Activated CD4-positive, alpha-beta T cell treated with anti-CD3 and anti-CD28 coated beads for 36 hours (primary cell): ENCODE measurements at regions of chr2 and their contacts with region 1.

Region 1: DNA sequence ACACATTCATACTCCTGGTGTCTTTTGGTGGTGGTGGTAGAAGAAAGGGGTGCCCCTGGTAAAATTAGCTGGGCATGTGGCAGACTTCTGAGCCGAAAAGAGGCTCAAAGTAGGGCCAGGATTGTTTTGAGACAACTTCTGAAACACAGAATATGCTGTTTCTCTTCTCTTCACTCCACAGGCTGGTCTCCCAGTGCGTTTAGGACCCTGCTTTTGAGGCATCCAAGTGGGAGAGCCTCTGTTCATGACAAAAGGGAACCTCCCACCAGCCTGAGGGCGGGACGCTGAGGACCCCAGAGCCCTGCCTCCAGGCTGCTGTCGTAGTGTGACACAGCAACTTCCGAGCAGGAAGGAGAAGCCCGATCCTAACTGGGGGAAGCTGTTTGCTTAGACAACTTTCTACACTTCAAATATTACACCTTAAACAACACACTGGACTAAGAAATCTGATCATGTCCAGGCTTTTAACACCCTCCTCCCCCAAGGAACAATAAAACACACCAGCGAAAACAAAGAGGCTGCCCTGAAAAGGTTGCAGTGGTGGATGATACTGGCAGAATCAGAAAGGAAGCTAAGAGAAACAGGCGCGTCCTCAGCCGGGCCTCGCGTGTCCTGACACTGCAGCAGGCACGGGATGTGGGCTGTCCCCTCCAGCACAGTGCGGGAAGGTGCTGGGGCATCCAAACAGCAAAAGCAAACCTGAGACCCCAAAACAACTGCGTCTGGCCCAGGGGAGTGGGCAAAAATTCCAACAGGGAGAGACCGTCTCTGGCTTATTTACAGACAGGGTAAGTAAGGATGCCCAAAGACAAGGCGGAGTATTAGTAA is 9.3 kb downstream of the SERTAD2 start:
- DNase-seq: peak; percentile 72
- ATAC-seq: peak; percentile 73
- H3K4me3 Mint-ChIP-seq: peak overlapping the region; percentile 74
- H3K27ac Mint-ChIP-seq: peak overlapping the region; percentile 94
- H3K4me1 Mint-ChIP-seq: peaks cover 82% of the 10 kb centered on the region
- H3K27me3 Mint-ChIP-seq: no peaks in the 10 kb centered on the region

Region 2: DNA sequence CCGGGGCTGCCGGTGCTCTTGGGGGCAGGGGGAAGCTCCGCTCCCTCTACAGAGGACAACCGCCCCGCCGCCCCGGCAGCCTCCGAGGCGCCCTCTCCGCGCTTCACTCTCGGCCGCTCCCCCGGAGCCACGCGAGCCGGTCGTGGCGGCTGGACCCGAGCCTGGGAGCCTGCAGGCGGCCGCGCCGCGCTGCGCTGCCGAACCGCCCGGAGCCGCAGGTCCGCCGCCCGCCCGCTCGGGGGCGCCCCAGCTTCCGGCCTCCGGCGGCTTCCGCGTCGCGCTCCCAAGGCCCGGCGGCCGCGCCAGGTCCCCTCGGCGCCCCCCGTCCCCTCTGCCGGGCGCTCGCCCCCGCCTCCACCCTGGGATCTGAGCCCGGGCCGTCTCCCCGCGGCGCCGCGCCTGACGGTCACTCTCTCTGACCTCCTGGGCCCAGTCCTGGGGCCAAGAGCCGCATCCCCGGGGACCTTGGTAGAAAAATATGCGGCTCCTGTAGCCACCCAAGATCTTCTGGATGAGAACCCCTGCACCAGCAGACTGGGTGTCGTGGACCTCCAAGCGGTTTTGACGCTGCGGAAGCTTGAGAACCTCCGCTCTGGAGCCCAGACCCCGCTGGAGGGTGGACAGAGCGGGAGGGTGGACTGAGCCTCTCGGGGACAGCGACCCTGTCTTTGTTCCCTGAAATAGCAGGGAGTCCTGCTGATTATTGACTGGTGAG is 35.0 kb before region 1 on chr2:
- CTCF ChIA-PET with region 1: interaction called, 22 read pairs
- POLR2A ChIA-PET with region 1: interaction called, 5 read pairs
- intact Hi-C with region 1: no loop called
- DNase-seq: peak; percentile 82
- ATAC-seq: peak; percentile 61
- H3K4me3 Mint-ChIP-seq: peak overlapping the region; percentile 65
- H3K27ac Mint-ChIP-seq: no peak overlapping the region
- H3K4me1 Mint-ChIP-seq: peaks cover 25% of the 10 kb centered on the region
- H3K27me3 Mint-ChIP-seq: no peaks in the 10 kb centered on the region

Region 3: GRCh38 chr2:64666810-64667438 is 22.5 kb after region 1 on chr2:
- CTCF ChIA-PET with region 1: interaction called, 11 read pairs
- POLR2A ChIA-PET with region 1: no interaction called
- intact Hi-C with region 1: no loop called
- DNase-seq: no peak
- ATAC-seq: peak; percentile 69
- H3K4me3 Mint-ChIP-seq: no peak overlapping the region
- H3K27ac Mint-ChIP-seq: peak overlapping the region; percentile 58
- H3K4me1 Mint-ChIP-seq: peaks cover 49% of the 10 kb centered on the region
- H3K27me3 Mint-ChIP-seq: no peaks in the 10 kb centered on the region

Region 4: GRCh38 chr2:64704161-64704560 is 59.8 kb after region 1 on chr2:
- CTCF ChIA-PET with region 1: interaction called, 10 read pairs
- POLR2A ChIA-PET with region 1: no interaction called
- intact Hi-C with region 1: loop called in 1 of 2 experiments (anchors 2 kb)
- DNase-seq: no peak
- ATAC-seq: no peak
- H3K4me3 Mint-ChIP-seq: no peak overlapping the region
- H3K27ac Mint-ChIP-seq: no peak overlapping the region
- H3K4me1 Mint-ChIP-seq: peaks cover 37% of the 10 kb centered on the region
- H3K27me3 Mint-ChIP-seq: no peaks in the 10 kb centered on the region

Region 5: DNA sequence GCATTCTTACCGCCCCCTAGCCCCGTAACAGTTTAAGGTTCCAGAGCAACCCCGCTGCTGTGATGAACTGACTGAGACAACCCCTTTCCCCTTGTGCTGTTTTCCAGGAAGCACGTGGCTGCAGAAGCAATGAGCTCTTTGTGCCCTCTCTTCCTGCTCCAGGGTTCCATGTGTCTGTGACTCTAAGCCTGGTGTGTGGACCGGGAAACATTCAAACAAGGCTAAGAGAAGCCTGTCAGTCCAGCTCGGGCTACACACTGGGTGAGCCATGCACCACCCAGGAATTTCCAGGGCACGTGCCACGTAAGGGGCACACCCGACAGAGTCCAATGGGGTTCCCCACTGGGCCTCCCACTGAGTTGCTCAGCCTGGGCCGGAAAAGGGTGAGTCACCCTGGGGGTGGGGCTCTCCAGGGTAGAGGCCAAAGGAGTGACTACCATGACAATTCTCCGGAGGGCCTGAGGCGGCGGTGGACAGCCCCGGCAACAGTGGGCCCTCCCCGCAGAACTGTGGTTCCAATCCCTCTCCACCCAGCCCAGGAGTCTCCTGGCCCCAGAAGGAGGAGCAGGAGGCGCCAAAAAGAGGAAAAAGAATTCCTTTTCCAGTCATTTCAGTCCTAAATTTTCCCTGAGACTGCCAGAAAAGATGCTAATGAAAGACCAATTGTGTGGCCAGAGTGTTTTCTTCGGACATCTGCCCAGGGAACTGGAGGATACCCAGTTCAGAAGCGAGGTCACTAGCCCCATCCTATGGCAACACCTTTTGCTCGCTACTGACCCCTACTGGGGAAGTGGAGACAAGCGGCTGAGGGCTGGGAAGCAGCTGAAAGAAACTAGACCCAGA is 187.0 kb after region 1 on chr2:
- CTCF ChIA-PET with region 1: interaction called, 20 read pairs
- POLR2A ChIA-PET with region 1: no interaction called
- intact Hi-C with region 1: loop called (anchors 1 to 2 kb)
- DNase-seq: peak; percentile 92
- ATAC-seq: peak; percentile 96
- H3K4me3 Mint-ChIP-seq: peak overlapping the region; percentile 34
- H3K27ac Mint-ChIP-seq: peak overlapping the region; percentile 86
- H3K4me1 Mint-ChIP-seq: peaks cover 16% of the 10 kb centered on the region
- H3K27me3 Mint-ChIP-seq: no peaks in the 10 kb centered on the region

Region 6: GRCh38 chr2:64865073-64865830 is 220.9 kb after region 1 on chr2:
- CTCF ChIA-PET with region 1: interaction called, 16 read pairs
- POLR2A ChIA-PET with region 1: interaction called, 4 read pairs
- intact Hi-C with region 1: loop called (anchors 1 kb)
- DNase-seq: peak; percentile 78
- ATAC-seq: peak; percentile 74
- H3K4me3 Mint-ChIP-seq: peak overlapping the region; percentile 52
- H3K27ac Mint-ChIP-seq: no peak overlapping the region
- H3K4me1 Mint-ChIP-seq: no peaks in the 10 kb centered on the region
- H3K27me3 Mint-ChIP-seq: peaks cover 6% of the 10 kb centered on the region